ENCODE measurements at regions of chr6 and their contacts with region 1.

Region 1: GRCh38 chr6:37826188-37826587 is 6.7 kb downstream of the ZFAND3 start:
- DNase-seq: no peak
- ATAC-seq: no peak
- H3K4me3 Mint-ChIP-seq: no peak overlapping the region
- H3K27ac Mint-ChIP-seq: no peak overlapping the region
- H3K4me1 Mint-ChIP-seq: peaks cover 42% of the 10 kb centered on the region
- H3K27me3 Mint-ChIP-seq: no peaks in the 10 kb centered on the region

Region 2: GRCh38 chr6:37691904-37692806 is 134.0 kb before region 1 on chr6:
- CTCF ChIA-PET with region 1: no interaction called
- POLR2A ChIA-PET with region 1: no interaction called
- DNase-seq: peak; percentile 82
- ATAC-seq: peak; percentile 65
- H3K4me3 Mint-ChIP-seq: no peak overlapping the region
- H3K27ac Mint-ChIP-seq: no peak overlapping the region
- H3K4me1 Mint-ChIP-seq: peaks cover 15% of the 10 kb centered on the region
- H3K27me3 Mint-ChIP-seq: peaks cover 33% of the 10 kb centered on the region

Region 3: DNA sequence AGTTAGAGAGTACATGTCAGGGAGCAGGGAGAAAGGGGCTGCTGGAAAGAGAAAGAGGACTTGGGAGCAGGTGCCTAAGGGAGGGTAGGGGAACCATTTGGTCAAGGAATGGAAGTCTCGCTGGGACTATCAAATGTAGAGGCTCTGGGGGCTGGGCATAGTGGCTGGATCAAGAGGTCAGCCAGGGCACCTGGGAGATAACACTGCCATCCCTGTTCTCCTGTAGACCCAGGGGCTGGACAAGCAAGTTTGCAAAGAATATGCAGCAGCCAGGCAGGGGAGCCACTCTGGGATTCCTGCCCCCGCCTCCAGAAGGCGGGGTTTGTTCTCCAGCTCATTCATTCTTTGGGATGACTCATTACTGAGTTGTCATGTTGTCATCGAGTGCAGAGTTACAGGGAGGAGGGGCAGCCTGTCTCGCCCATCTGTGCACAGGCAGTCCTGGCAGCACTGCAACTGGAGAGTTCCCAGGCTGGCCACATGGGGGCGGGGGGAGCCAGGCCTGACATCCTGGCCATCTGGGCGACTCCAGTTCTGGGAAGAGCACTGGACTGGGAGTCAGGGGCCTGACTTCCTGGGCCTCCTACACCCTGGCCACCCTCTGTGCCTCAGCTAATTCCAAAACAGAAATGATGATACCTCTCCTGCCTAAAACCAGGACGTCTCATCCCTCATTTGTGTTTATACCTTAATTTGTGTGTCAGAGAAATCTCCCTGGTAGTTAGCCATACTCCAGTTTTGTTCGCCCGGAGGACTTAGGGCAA is 34.9 kb before region 1 on chr6:
- CTCF ChIA-PET with region 1: interaction called, 11 read pairs
- POLR2A ChIA-PET with region 1: no interaction called
- DNase-seq: peak; percentile 78
- ATAC-seq: peak; percentile 97
- H3K4me3 Mint-ChIP-seq: no peak overlapping the region
- H3K27ac Mint-ChIP-seq: no peak overlapping the region
- H3K4me1 Mint-ChIP-seq: peaks cover 9% of the 10 kb centered on the region
- H3K27me3 Mint-ChIP-seq: peaks cover 2% of the 10 kb centered on the region